ENCODE measurements at regions of chr6 and their contacts with region 1.

Region 1: GRCh38 chr6:41424370-41425058 is 89.1 kb downstream of the NCR2 start:
- DNase-seq: peak; percentile 58
- H3K4me3 Mint-ChIP-seq: no peak overlapping the region
- H3K27ac Mint-ChIP-seq: no peak overlapping the region
- H3K4me1 Mint-ChIP-seq: peaks cover 5% of the 10 kb centered on the region
- H3K27me3 Mint-ChIP-seq: peaks cover 28% of the 10 kb centered on the region

Region 2: GRCh38 chr6:41306187-41306854 is 118.2 kb before region 1 on chr6:
- intact Hi-C with region 1: no loop called
- DNase-seq: no peak
- H3K4me3 Mint-ChIP-seq: no peak overlapping the region
- H3K27ac Mint-ChIP-seq: no peak overlapping the region
- H3K4me1 Mint-ChIP-seq: peaks cover 8% of the 10 kb centered on the region
- H3K27me3 Mint-ChIP-seq: peaks cover 57% of the 10 kb centered on the region

Region 3: GRCh38 chr6:41325446-41326066 is 99.0 kb before region 1 on chr6:
- intact Hi-C with region 1: no loop called
- DNase-seq: no peak
- H3K4me3 Mint-ChIP-seq: no peak overlapping the region
- H3K27ac Mint-ChIP-seq: no peak overlapping the region
- H3K4me1 Mint-ChIP-seq: no peaks in the 10 kb centered on the region
- H3K27me3 Mint-ChIP-seq: peaks cover 38% of the 10 kb centered on the region

Region 4: DNA sequence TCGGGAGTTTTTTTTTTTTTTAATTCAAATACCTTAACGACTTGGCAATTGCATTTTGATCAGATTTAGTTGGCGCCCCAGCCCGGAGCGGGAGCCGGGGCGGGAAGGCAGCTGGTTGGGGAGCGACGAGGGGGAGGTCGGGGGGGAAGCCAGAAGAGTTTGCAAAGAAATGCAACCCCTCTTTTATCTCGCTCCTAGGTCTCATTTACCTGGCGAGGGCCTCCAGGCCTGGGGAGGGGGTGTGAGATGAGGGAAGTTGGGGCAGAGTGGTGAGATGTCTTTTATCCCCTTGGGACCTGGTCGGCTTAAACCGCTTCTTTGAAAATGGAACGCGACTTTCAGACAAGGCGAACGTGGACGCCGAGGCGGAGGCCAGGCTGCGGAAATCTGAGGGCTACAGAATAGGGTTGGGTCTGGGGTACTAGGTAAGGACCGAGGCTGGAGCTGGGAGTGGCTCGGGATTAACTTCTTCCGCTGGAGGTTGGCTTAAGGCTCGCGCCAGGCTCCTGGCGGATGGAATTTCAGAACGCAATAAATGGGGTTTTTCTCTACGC is 48.8 kb before region 1 on chr6:
- intact Hi-C with region 1: loop called (anchors 2 kb)
- DNase-seq: no peak
- H3K4me3 Mint-ChIP-seq: no peak overlapping the region
- H3K27ac Mint-ChIP-seq: no peak overlapping the region
- H3K4me1 Mint-ChIP-seq: peaks cover 7% of the 10 kb centered on the region
- H3K27me3 Mint-ChIP-seq: peaks cover 82% of the 10 kb centered on the region

Region 5: DNA sequence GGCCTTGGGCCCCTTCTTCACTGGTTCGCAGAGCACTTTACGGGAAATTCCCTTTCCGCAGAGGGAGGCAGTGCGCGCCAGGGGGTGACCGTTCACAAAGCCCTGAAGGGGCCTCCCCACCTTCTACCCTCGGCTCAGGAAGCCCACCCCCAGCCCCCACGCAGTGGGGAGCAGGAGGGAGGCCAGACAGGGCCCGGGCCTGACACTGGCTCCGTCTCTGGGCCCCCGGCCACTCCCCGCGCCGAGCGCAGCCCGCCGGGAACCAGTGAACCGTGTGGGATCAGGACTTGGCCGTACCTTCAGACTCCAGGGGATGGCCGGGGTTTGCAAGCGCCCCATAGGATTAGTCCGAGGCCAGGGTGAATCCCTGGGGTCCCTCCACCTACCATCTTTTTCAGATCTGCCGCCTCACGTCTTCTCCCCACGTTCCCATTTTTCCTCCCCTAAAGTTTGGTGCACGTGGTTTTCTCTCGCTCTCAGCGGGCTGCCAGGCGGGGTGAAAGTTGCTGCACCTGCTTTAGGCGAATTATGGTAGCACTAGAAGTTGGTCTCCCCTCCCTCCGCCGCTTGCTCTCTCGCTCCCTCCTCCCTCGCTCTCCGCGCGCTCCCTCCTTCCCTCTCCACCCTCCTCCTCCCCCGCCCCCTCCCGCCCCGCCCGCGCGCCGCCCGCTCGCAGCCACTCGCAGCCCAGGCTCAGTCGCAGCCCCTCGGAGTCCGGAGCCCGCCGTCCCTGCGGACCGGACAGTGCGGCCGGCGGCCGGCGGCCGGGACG is 121.4 kb after region 1 on chr6 and contains the start of gene FOXP4:
- intact Hi-C with region 1: loop called (anchors 5 kb)
- DNase-seq: peak; percentile 77
- H3K4me3 Mint-ChIP-seq: peak within 1 kb of the TSS; percentile 86
- H3K27ac Mint-ChIP-seq: peak within 1 kb of the TSS; percentile 50
- H3K4me1 Mint-ChIP-seq: peaks cover 22% of the 10 kb centered on the region
- H3K27me3 Mint-ChIP-seq: peaks cover 72% of the 10 kb centered on the region
- total RNA-seq, gene FOXP4: 9.6 and 9.7 TPM in 2 replicates

Region 6: DNA sequence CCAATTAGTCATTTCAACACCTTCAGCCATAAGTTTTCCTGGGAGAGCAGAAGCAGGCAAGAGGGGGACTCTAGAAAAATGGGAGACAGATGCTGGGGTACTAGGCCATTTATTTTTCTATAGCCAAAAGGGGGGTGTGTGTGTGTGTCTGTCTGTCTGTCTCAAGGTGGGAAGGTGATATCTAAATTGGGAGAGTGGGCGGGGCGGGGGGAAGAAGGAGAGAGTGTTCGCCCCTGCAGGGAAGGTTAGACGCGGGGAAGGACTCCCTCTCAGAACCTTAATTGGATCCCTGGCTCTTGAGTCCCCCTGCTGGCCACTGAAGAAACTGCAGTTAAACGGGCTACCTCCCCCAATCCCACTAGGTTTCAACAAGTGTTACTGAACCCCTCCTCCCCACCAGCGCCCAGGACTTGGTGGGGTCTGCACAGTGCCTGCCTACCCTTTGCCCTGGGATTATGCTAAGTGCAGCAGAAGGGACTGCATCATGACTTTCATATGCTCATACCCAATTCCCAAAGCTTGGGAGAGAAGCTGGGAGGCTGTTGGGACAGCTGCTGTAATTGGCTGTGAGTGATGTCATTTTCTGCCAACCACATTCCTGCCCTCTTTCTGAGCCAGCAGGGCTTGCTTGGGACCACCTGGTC is 167.5 kb after region 1 on chr6:
- intact Hi-C with region 1: loop called (anchors 1 kb)
- DNase-seq: peak; percentile 65
- H3K4me3 Mint-ChIP-seq: no peak overlapping the region
- H3K27ac Mint-ChIP-seq: no peak overlapping the region
- H3K4me1 Mint-ChIP-seq: peaks cover 1% of the 10 kb centered on the region
- H3K27me3 Mint-ChIP-seq: no peaks in the 10 kb centered on the region

Region 7: GRCh38 chr6:41683510-41684310 is 259.2 kb after region 1 on chr6:
- intact Hi-C with region 1: loop called (anchors 2 kb)
- DNase-seq: peak; percentile 70
- H3K4me3 Mint-ChIP-seq: peak overlapping the region; percentile 81
- H3K27ac Mint-ChIP-seq: peak overlapping the region; percentile 85
- H3K4me1 Mint-ChIP-seq: peaks cover 5% of the 10 kb centered on the region
- H3K27me3 Mint-ChIP-seq: no peaks in the 10 kb centered on the region